Calu3 (cell line): ENCODE measurements at regions of chr6 and their contacts with region 1.

Region 1: GRCh38 chr6:96897383-96898240 is at the start of gene NDUFAF4:
- DNase-seq: peak; percentile 96
- H3K4me3 Mint-ChIP-seq: peak within 1 kb of the TSS; percentile 70
- H3K27ac Mint-ChIP-seq: peak within 1 kb of the TSS; percentile 90
- H3K4me1 Mint-ChIP-seq: peaks cover 11% of the 10 kb centered on the region
- H3K27me3 Mint-ChIP-seq: no peaks in the 10 kb centered on the region
- CTCF ChIP-seq: peak; percentile 84
- total RNA-seq, gene NDUFAF4: 39.6 and 50.9 TPM in 2 replicates

Region 2: GRCh38 chr6:95364016-95364604 is 1533.5 kb before region 1 on chr6:
- CTCF ChIA-PET with region 1: no interaction called
- intact Hi-C with region 1: loop called (anchors 10 kb)
- DNase-seq: no peak
- H3K4me3 Mint-ChIP-seq: no peak overlapping the region
- H3K27ac Mint-ChIP-seq: no peak overlapping the region
- H3K4me1 Mint-ChIP-seq: peaks cover 8% of the 10 kb centered on the region
- H3K27me3 Mint-ChIP-seq: no peaks in the 10 kb centered on the region
- CTCF ChIP-seq: no peak

Region 3: GRCh38 chr6:96626759-96627364 is 270.8 kb before region 1 on chr6:
- CTCF ChIA-PET with region 1: interaction called, 13 read pairs
- intact Hi-C with region 1: loop called (anchors 2 kb)
- DNase-seq: no peak
- H3K4me3 Mint-ChIP-seq: no peak overlapping the region
- H3K27ac Mint-ChIP-seq: no peak overlapping the region
- H3K4me1 Mint-ChIP-seq: no peaks in the 10 kb centered on the region
- H3K27me3 Mint-ChIP-seq: no peaks in the 10 kb centered on the region
- CTCF ChIP-seq: no peak

Region 4: GRCh38 chr6:97053643-97054411 is 156.2 kb after region 1 on chr6:
- CTCF ChIA-PET with region 1: interaction called, 15 read pairs
- intact Hi-C with region 1: loop called (anchors 1 kb)
- DNase-seq: no peak
- H3K4me3 Mint-ChIP-seq: no peak overlapping the region
- H3K27ac Mint-ChIP-seq: no peak overlapping the region
- H3K4me1 Mint-ChIP-seq: no peaks in the 10 kb centered on the region
- H3K27me3 Mint-ChIP-seq: peaks cover 22% of the 10 kb centered on the region
- CTCF ChIP-seq: no peak

Region 5: DNA sequence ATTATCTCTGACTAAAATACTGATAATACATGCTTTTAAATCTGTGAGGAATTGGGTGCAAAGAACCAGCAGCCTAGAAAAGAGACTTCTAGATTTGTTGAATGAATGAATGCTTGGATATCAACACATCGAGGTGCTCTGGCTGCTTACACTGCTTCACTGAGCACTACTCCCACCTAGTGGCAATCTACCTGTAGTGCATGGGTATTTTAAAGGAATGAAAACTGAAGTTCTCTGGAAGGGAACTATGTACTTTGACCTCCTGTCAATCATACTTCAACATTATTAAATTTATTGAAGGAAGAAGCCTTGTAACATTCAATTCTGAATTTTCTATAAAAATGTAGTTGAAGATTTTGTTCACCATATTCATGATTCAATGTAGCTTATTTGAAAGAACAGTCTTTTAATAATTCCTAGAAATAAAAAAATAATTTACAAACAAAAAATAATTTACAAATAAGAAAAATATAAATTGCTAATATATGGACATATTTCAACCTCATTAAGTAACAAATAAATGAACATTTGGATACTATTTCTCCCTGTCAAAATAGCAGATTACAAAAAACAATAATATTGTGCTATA is 496.6 kb after region 1 on chr6:
- CTCF ChIA-PET with region 1: no interaction called
- intact Hi-C with region 1: loop called (anchors 2 kb)
- DNase-seq: peak; percentile 68
- H3K4me3 Mint-ChIP-seq: no peak overlapping the region
- H3K27ac Mint-ChIP-seq: no peak overlapping the region
- H3K4me1 Mint-ChIP-seq: no peaks in the 10 kb centered on the region
- H3K27me3 Mint-ChIP-seq: no peaks in the 10 kb centered on the region
- CTCF ChIP-seq: peak; percentile 76